HEK293 (cell line): ENCODE measurements at regions of chr1 and their contacts with region 1.

Region 1: DNA sequence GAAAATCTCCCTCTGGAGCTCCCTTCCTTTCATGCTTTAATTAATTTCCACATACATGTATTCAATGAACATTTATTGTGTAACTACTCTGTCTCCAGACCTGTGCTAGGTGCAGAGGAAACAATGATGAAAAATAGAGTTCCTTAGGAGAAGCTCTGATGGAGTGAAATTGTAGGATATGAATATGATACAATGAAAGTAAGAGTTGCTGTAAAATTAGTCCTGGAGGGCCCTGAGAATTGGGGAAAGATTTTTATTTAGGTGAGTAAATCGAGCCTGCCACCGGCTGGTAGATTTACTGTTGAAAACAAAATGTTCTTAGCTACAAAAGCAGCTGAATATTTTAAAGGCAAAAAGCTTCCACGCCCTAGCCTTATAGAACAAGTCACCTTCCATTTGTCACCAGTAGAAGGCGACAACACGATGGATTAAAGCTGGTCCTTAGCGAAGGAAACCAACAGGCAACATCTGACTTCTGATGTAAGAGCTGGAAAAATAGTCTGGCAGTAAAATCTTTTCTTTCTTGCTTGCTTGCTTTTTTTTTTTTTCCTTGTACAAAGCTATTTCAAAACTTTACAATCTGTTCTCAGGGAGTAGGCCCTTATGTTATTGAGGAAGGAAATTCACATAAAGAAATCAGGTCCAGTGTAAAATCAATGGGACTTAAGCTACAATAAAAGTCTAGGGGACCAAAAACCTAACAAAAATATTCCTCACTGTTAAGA is 82.0 kb upstream of the ROR1 start:
- H3K4me3 ChIP-seq: no peak overlapping the region
- H3K27ac ChIP-seq: no peak overlapping the region
- H3K4me1 ChIP-seq: no peaks in the 10 kb centered on the region
- CTCF ChIP-seq: peak; percentile 46

Region 2: GRCh38 chr1:63674238-63674864 is 17.5 kb before region 1 on chr1:
- CTCF ChIA-PET with region 1: interaction called, 42 read pairs
- POLR2A ChIA-PET with region 1: no interaction called
- H3K4me3 ChIP-seq: no peak overlapping the region
- H3K27ac ChIP-seq: no peak overlapping the region
- H3K4me1 ChIP-seq: no peaks in the 10 kb centered on the region; the same call in 1 of the 2 replicates
- CTCF ChIP-seq: peak; percentile 55; the same call in 1 of the 2 replicates

Region 3: GRCh38 chr1:63917571-63918417 is 225.9 kb after region 1 on chr1:
- CTCF ChIA-PET with region 1: interaction called, 26 read pairs
- POLR2A ChIA-PET with region 1: no interaction called
- H3K4me3 ChIP-seq: no peak overlapping the region
- H3K27ac ChIP-seq: no peak overlapping the region
- H3K4me1 ChIP-seq: peaks cover 11% of the 10 kb centered on the region
- CTCF ChIP-seq: no peak

Region 4: GRCh38 chr1:64136752-64137411 is 445.0 kb after region 1 on chr1:
- CTCF ChIA-PET with region 1: interaction called, 32 read pairs
- POLR2A ChIA-PET with region 1: no interaction called
- H3K4me3 ChIP-seq: no peak overlapping the region
- H3K27ac ChIP-seq: no peak overlapping the region
- H3K4me1 ChIP-seq: no peaks in the 10 kb centered on the region
- CTCF ChIP-seq: peak; percentile 73